AG04449 (cell line): ENCODE measurements at regions of chr6 and their contacts with region 1.

Region 1: GRCh38 chr6:132798869-132799538 is 567 bp upstream of the SLC18B1 start:
- DNase-seq: no peak
- H3K4me3 ChIP-seq: peak overlapping the region; percentile 73
- CTCF ChIP-seq: peak; percentile 81

Region 2: GRCh38 chr6:132530293-132530974 is 268.6 kb before region 1 on chr6:
- CTCF ChIA-PET with region 1: interaction called, 14 read pairs
- POLR2A ChIA-PET with region 1: no interaction called
- DNase-seq: no peak
- H3K4me3 ChIP-seq: no peak overlapping the region
- CTCF ChIP-seq: peak; percentile 66

Region 3: GRCh38 chr6:132669690-132670291 is 129.2 kb before region 1 on chr6:
- CTCF ChIA-PET with region 1: interaction called, 62 read pairs
- POLR2A ChIA-PET with region 1: no interaction called
- DNase-seq: no peak
- H3K4me3 ChIP-seq: no peak overlapping the region
- CTCF ChIP-seq: no peak

Region 4: DNA sequence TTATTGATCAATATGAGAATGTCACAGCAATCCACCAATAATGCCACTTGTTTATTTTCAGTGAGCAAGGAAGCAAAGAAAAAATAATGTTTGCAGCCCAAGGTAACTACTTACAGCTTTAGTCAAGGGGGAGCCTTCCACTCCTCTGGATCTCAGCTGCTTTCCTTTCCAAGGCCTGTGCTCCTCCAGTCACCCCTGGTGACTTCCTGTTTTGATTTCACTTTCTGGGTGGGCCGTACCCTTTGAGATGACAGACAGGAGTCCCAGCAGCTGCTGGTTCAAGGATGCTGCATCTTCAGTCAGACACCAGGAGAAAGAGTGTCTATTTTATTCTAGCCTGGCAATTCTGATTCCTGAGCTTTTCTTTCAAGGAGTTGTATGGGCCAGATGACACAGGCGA is 35.7 kb before region 1 on chr6:
- CTCF ChIA-PET with region 1: interaction called, 16 read pairs
- POLR2A ChIA-PET with region 1: no interaction called
- DNase-seq: no peak
- H3K4me3 ChIP-seq: no peak overlapping the region
- CTCF ChIP-seq: no peak

Region 5: GRCh38 chr6:132813173-132813856 is 14.3 kb after region 1 on chr6:
- CTCF ChIA-PET with region 1: interaction called, 24 read pairs
- POLR2A ChIA-PET with region 1: interaction called, 18 read pairs
- DNase-seq: no peak
- H3K4me3 ChIP-seq: peak overlapping the region; percentile 85
- CTCF ChIP-seq: no peak